ENCODE measurements at regions of chr1 and their contacts with region 1.

Region 1: DNA sequence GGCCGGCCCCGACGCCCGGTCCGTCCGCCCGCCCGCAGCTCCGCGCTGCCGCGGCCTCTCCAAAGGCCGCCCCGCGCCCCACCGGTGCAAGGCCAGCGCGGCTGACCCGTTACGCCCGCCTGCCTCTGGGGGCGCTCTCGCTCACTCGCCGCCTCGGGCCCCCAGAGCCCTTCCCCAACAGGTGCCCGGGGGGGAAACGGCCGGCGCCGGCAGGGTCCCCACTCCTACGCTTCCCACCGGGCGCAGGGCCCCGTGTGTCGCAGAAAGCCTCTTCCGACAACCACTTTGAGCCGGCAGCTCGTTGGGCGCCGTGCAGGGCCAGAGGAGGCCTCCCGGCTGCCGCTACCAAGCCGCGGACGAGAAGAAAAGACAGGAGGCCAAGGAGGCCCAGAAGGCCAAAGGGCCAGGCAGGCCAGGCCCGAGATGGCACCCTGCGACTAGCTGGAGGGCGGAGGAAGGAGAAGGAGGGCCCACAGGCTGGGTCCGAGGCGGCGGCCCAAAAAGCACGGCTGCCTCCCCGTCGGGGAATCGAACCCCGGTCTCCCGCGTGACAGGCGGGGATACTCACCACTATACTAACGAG is 64.9 kb upstream of the FCGR2A start:
- DNase-seq: peak; percentile 83
- ATAC-seq: peak; percentile 58
- H3K4me3 Mint-ChIP-seq: peak overlapping the region; percentile 82
- H3K27ac Mint-ChIP-seq: peak overlapping the region; percentile 67
- H3K4me1 Mint-ChIP-seq: peaks cover 10% of the 10 kb centered on the region
- H3K27me3 Mint-ChIP-seq: peaks cover 27% of the 10 kb centered on the region

Region 2: GRCh38 chr1:161427733-161428516 is 12.5 kb before region 1 on chr1:
- CTCF ChIA-PET with region 1: interaction called, 15 read pairs
- POLR2A ChIA-PET with region 1: no interaction called
- intact Hi-C with region 1: no loop called
- DNase-seq: peak; percentile 69
- ATAC-seq: peak; percentile 88
- H3K4me3 Mint-ChIP-seq: peak overlapping the region; percentile 45
- H3K27ac Mint-ChIP-seq: peak overlapping the region; percentile 10
- H3K4me1 Mint-ChIP-seq: peaks cover 15% of the 10 kb centered on the region
- H3K27me3 Mint-ChIP-seq: peaks cover 45% of the 10 kb centered on the region

Region 3: DNA sequence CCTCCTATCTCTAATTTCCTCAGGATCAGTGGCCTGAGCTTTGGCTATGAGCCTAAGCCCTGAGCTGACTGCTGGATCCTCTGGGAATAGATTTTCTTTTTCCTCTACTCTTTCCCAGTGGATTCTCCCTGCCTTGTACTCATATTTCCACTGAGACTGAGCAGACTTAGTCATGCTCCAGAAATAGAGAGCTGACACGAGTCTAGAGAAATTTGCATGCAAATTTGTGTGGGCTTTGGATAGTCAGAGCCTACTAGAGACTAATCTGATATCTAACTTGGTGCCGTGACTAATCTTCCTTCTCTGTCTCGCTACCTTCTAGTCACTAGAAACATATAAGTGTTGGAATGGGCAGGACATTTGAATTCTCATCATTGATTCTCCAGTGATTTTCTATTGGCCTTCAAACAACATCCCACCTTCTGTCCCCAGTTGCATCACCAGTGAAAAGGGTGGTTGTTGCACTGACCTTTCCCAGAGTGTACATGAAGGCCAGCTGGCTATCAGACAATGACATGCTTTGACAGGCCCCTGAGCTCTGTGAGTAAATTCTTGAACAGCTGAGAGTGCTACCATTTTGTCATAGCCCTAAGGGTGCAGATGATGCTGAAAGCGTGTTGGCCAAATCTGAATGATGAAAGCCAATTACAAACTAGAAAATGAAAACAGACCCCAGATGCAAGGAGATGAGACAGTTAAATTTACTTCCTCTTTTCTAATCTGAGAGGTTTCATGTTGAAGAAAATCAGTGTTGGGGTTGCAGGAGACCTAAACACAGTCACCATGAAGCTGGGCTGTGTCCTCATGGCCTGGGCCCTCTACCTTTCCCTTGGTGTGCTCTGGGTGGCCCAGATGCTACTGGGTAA is 266.3 kb after region 1 on chr1 and contains the start of gene FCRLA:
- CTCF ChIA-PET with region 1: no interaction called
- POLR2A ChIA-PET with region 1: no interaction called
- intact Hi-C with region 1: no loop called
- DNase-seq: no peak
- ATAC-seq: peak; percentile 90
- H3K4me3 Mint-ChIP-seq: no peak within 1 kb of the TSS
- H3K27ac Mint-ChIP-seq: no peak within 1 kb of the TSS
- H3K4me1 Mint-ChIP-seq: no peaks in the 10 kb centered on the region
- H3K27me3 Mint-ChIP-seq: peaks cover 13% of the 10 kb centered on the region
- total RNA-seq, gene FCRLA: not detected

Measured in activated CD4-positive, alpha-beta T cell treated with anti-CD3 and anti-CD28 coated beads for 36 hours (primary cell).